Panc1 (cell line): ENCODE measurements at regions of chr2 and their contacts with region 1.

Region 1: GRCh38 chr2:177964892-177965291 is 107.7 kb downstream of the PDE11A start:
- DNase-seq: no peak
- ATAC-seq: no peak
- H3K4me3 ChIP-seq: no peak overlapping the region
- H3K27ac ChIP-seq: no peak overlapping the region
- H3K4me1 ChIP-seq: no peaks in the 10 kb centered on the region
- H3K27me3 ChIP-seq: no peaks in the 10 kb centered on the region
- CTCF ChIP-seq: no peak

Region 2: GRCh38 chr2:176914371-176914770 is 1050.5 kb before region 1 on chr2:
- CTCF ChIA-PET with region 1: no interaction called
- POLR2A ChIA-PET with region 1: interaction called, 10 read pairs
- in situ Hi-C with region 1: no loop called
- intact Hi-C with region 1: no loop called
- DNase-seq: no peak
- ATAC-seq: no peak
- H3K4me3 ChIP-seq: no peak overlapping the region
- H3K27ac ChIP-seq: no peak overlapping the region
- H3K4me1 ChIP-seq: no peaks in the 10 kb centered on the region
- H3K27me3 ChIP-seq: no peaks in the 10 kb centered on the region
- CTCF ChIP-seq: no peak